Transverse colon (tissue), 4 donors: ENCODE measurements at regions of chr1 and their contacts with region 1.

Region 1: DNA sequence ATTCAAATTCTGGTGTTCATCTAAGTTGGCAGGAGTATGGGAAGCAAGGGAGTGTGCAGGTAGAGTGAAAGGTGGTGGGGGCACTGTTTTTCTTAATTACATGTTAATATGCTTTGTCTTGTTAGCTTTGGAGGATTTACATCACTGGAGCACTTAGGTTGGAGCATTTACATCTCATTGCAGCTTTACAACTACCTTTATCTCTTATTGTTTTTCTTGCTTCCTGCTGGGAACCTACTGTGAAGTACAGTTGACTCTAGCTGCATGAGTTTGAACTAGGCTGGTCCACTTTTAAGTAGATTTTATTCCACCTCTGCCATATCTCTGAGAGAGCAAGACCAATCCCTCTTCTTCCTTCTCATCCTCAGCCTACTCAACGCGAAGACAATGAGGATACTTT is 554.8 kb upstream of the B3GALT2 start:
- DNase-seq: no peak
- H3K4me3 ChIP-seq: no peak overlapping the region
- H3K27ac ChIP-seq: no peak overlapping the region
- H3K4me1 ChIP-seq: no peaks in the 10 kb centered on the region
- H3K27me3 ChIP-seq: no peaks in the 10 kb centered on the region
- CTCF ChIP-seq: no peak
- EP300 ChIP-seq: no peak
- POLR2A ChIP-seq: no peak

Region 2: GRCh38 chr1:193785850-193786420 is 44.7 kb after region 1 on chr1:
- in situ Hi-C with region 1: no loop called
- intact Hi-C with region 1: loop called (anchors 2 kb)
- DNase-seq: no peak
- H3K4me3 ChIP-seq: no peak overlapping the region
- H3K27ac ChIP-seq: peak overlapping the region; percentile 75 to 79 (median 77)
- H3K4me1 ChIP-seq: peaks cover 0 to 43% (median 16%) of the 10 kb centered on the region in 4 donors
- H3K27me3 ChIP-seq: no peaks in the 10 kb centered on the region
- CTCF ChIP-seq: no peak
- EP300 ChIP-seq: no peak
- POLR2A ChIP-seq: no peak